Activated CD4-positive, alpha-beta T cell treated with anti-CD3 and anti-CD28 coated beads for 36 hours (primary cell): ENCODE measurements at regions of chr12 and their contacts with region 1.

Region 1: GRCh38 chr12:110896559-110896958 is 23.8 kb downstream of the MYL2 start:
- DNase-seq: no peak
- ATAC-seq: no peak
- H3K4me3 Mint-ChIP-seq: no peak overlapping the region
- H3K27ac Mint-ChIP-seq: no peak overlapping the region
- H3K4me1 Mint-ChIP-seq: peaks cover 5% of the 10 kb centered on the region
- H3K27me3 Mint-ChIP-seq: peaks cover 13% of the 10 kb centered on the region

Region 2: DNA sequence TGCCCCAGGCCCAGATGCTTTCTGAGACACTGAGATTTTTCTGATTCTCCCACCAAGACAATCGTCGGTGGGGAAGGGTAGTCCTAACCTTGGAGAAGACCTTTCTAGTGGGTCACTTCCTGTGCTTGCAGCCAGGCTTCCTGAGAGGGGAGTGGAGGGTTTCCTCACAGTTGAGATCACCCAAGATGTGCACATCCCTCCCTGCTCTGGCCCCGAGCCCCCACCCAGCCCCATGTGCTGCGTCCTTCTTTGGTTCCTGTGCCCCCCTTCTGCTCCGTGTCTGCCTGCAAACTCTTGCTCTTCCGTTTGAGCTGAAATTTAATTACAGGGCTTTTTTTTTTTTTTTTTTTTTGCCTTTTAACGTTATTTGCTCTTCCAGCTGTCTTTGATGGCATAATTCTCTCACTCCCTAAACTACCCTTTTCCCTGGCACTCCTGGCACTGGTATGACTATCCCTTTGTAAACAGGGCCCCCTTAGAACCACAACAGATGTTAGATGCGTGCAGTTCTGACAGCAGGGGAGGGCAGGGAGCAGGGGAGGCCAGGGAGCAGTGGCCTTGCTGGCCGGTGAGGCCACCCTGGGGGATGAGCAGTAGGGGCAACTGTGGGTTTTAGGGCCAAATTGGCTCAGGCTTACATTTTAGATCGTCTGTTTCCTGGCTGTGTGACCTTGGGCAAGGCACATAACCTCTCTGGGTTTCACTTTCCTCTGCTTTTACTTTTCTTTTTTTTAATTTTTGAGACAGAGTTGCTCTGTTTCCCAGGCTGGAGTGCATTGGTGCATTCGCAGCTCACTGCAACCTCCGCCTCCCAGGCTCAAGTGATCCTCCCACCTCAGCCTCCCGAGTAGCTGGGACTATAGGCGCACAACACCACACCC is 327.9 kb after region 1 on chr12:
- CTCF ChIA-PET with region 1: no interaction called
- POLR2A ChIA-PET with region 1: no interaction called
- intact Hi-C with region 1: no loop called
- DNase-seq: no peak
- ATAC-seq: no peak
- H3K4me3 Mint-ChIP-seq: no peak overlapping the region
- H3K27ac Mint-ChIP-seq: no peak overlapping the region
- H3K4me1 Mint-ChIP-seq: peaks cover 6% of the 10 kb centered on the region
- H3K27me3 Mint-ChIP-seq: peaks cover 2% of the 10 kb centered on the region

Region 3: GRCh38 chr12:111298582-111299436 is 402.2 kb after region 1 on chr12:
- CTCF ChIA-PET with region 1: interaction called, 14 read pairs
- POLR2A ChIA-PET with region 1: no interaction called
- intact Hi-C with region 1: loop called in 1 of 2 experiments (anchors 2 kb)
- DNase-seq: peak; percentile 76
- ATAC-seq: peak; percentile 60
- H3K4me3 Mint-ChIP-seq: no peak overlapping the region
- H3K27ac Mint-ChIP-seq: no peak overlapping the region
- H3K4me1 Mint-ChIP-seq: no peaks in the 10 kb centered on the region
- H3K27me3 Mint-ChIP-seq: no peaks in the 10 kb centered on the region

Region 4: GRCh38 chr12:111313833-111314259 is 417.3 kb after region 1 on chr12:
- CTCF ChIA-PET with region 1: no interaction called
- POLR2A ChIA-PET with region 1: no interaction called
- intact Hi-C with region 1: loop called in 1 of 2 experiments (anchors 2 kb)
- DNase-seq: peak; percentile 85
- ATAC-seq: peak; percentile 77
- H3K4me3 Mint-ChIP-seq: no peak overlapping the region
- H3K27ac Mint-ChIP-seq: no peak overlapping the region
- H3K4me1 Mint-ChIP-seq: peaks cover 9% of the 10 kb centered on the region
- H3K27me3 Mint-ChIP-seq: peaks cover 4% of the 10 kb centered on the region